Naive thymus-derived CD4-positive, alpha-beta T cell (primary cell): ENCODE measurements at regions of chr20 and their contacts with region 1.

Region 1: DNA sequence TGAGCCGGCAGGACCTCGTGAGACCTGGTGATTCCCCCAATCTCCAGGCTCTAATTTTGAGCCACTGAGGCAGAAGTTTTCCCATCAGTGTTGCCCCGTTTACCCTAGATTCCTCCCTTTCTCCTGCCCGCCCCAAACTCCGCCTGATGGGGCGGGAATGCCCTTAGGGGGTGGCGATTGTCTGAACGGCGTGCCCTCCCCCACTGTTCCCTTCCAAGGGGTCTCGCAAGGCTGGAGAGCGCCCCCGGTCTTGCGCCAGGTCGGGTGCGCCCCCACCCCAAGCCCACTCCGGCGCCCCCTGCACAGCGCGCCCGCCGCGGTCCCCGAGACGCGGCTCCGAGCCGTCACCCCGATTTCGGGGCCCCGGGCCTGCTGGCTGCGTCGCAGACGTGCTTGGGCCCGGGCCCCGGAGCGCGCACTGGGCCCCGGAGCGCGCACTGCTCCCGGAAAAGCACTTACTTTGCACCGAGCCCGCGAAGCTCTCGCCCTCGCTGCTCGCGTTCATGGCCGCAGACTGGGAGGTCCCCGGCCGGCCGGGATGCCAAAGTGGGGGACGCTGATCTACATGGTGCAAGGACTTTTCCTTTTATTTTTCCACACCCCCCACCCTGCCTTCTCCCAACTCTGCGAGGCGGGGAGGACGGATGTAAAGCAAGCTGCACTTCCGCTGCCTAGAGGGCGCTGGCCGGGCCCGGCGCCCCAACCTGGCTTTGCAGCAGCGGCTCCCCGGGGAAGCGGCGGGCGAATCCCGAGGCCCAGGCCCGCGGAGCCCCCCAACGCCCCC is at the start of gene ZFP64:
- DNase-seq: peak; percentile 72 to 85 (median 83)
- ATAC-seq: peak; percentile 89
- H3K4me3 ChIP-seq: peak within 1 kb of the TSS; percentile 88
- H3K4me3 Mint-ChIP-seq: peak within 1 kb of the TSS; percentile 81 to 96 (median 94)
- H3K27ac ChIP-seq: peak within 1 kb of the TSS; percentile 78
- H3K27ac Mint-ChIP-seq: peak within 1 kb of the TSS; percentile 86 to 95 (median 93)
- H3K4me1 ChIP-seq: peaks cover 0 to 10% of the 10 kb centered on the region in 2 donors
- H3K4me1 Mint-ChIP-seq: peaks cover 7 to 27% (median 18%) of the 10 kb centered on the region in 7 donors
- H3K27me3 ChIP-seq: no peaks in the 10 kb centered on the region
- H3K27me3 Mint-ChIP-seq: no peaks in the 10 kb centered on the region
- total RNA-seq, gene ZFP64: 8.0 to 14.6 (median 11.6) TPM

Region 2: DNA sequence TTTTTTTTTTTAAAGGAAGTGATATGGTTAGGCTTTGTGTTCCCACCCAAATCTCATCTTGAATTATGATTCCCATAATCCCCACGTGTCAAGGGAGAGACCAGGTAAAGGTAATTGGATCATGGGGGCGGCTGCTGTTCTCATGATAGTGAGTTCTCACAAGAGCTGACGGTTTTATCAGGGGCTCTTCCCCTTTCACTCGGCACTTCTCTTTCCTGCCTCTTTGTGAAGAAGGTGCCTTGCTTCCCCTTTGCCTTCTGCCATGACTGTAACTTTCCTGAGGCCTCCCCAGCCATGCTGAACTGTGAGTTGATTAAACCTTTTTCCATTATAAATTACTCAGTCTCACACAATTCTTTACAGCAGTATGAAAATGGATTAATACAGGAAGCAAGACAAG is 64.0 kb before region 1 on chr20:
- CTCF ChIA-PET with region 1: no interaction called
- POLR2A ChIA-PET with region 1: no interaction called
- intact Hi-C with region 1: loop called (anchors 1 to 2 kb)
- DNase-seq: no peak
- ATAC-seq: no peak
- H3K4me3 ChIP-seq: no peak overlapping the region
- H3K4me3 Mint-ChIP-seq: no peak overlapping the region
- H3K27ac ChIP-seq: no peak overlapping the region
- H3K27ac Mint-ChIP-seq: peak overlapping the region in 1 of 9 donors; percentile 3
- H3K4me1 ChIP-seq: no peaks in the 10 kb centered on the region
- H3K4me1 Mint-ChIP-seq: peaks cover 0 to 8% (median 2%) of the 10 kb centered on the region in 7 donors
- H3K27me3 ChIP-seq: no peaks in the 10 kb centered on the region
- H3K27me3 Mint-ChIP-seq: peaks cover 0 to 3% (median 0%) of the 10 kb centered on the region in 5 donors

Region 3: DNA sequence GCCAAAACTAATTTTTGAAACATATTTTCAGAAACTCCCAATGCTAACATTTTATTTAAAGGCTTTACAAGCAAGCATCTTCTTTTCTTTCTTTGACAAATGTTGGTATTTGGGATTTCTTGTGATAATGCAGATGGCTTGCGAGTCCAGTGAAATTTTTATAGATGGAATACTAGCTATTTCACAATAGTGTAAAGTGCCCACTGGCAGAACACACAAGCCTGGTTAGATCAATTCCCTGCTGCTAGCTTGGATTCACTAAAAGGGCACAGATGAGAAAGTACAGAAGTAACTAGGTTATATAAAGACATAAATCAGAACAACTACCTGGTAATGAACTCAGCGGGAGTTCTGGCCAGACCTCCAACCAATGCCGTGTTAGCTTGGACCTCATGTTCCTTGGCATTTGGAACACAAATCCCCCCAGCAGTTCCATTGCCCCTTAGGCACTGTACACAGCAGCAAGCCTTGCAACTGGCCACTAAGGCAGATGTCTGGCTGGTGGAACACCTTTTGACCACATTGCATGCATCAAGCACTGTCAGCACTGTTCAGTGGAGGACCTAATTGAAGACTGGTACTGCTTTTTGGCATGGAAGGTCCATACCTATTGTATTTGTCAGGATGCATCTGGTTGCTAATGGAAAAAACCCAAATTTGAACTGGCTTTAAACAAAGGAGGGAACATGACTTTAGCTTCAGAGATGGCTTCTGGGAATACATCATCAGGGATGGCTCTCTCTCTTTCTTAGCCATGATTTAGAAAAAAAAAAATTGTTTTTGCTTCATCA is 15.9 kb after region 1 on chr20:
- CTCF ChIA-PET with region 1: no interaction called
- POLR2A ChIA-PET with region 1: no interaction called
- intact Hi-C with region 1: no loop called
- DNase-seq: no peak
- ATAC-seq: no peak
- H3K4me3 ChIP-seq: no peak overlapping the region
- H3K4me3 Mint-ChIP-seq: no peak overlapping the region
- H3K27ac ChIP-seq: no peak overlapping the region
- H3K27ac Mint-ChIP-seq: no peak overlapping the region
- H3K4me1 ChIP-seq: no peaks in the 10 kb centered on the region
- H3K4me1 Mint-ChIP-seq: peaks cover 0 to 5% (median 0%) of the 10 kb centered on the region in 7 donors
- H3K27me3 ChIP-seq: no peaks in the 10 kb centered on the region
- H3K27me3 Mint-ChIP-seq: peaks cover 5 to 21% (median 12%) of the 10 kb centered on the region in 5 donors

Region 4: DNA sequence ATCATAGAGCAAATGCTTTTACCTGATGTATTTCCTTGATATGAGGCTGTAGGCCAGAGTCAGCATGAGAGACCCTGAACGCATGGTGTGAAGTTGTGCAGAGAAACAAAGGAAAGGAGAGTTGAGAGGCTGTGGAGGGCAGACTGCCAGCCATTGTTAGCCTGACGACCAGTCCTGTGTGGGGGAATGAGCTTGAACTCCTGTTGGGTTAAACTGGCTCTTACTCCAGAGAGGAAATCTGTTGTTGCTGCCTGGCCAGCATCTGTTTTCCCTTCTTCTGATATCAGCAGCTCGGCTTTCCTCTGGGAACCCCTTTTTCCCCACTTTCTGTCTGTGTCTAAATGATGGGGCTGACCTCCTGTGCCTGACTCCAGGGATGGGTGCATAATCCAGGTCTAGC is 158.5 kb after region 1 on chr20:
- CTCF ChIA-PET with region 1: no interaction called
- POLR2A ChIA-PET with region 1: no interaction called
- intact Hi-C with region 1: no loop called
- DNase-seq: no peak
- ATAC-seq: no peak
- H3K4me3 ChIP-seq: no peak overlapping the region
- H3K4me3 Mint-ChIP-seq: no peak overlapping the region
- H3K27ac ChIP-seq: no peak overlapping the region
- H3K27ac Mint-ChIP-seq: peak overlapping the region in 1 of 9 donors; percentile 34
- H3K4me1 ChIP-seq: no peaks in the 10 kb centered on the region
- H3K4me1 Mint-ChIP-seq: peaks cover 0 to 15% (median 9%) of the 10 kb centered on the region in 7 donors
- H3K27me3 ChIP-seq: no peaks in the 10 kb centered on the region
- H3K27me3 Mint-ChIP-seq: peaks cover 0 to 5% (median 0%) of the 10 kb centered on the region in 5 donors

Region 5: DNA sequence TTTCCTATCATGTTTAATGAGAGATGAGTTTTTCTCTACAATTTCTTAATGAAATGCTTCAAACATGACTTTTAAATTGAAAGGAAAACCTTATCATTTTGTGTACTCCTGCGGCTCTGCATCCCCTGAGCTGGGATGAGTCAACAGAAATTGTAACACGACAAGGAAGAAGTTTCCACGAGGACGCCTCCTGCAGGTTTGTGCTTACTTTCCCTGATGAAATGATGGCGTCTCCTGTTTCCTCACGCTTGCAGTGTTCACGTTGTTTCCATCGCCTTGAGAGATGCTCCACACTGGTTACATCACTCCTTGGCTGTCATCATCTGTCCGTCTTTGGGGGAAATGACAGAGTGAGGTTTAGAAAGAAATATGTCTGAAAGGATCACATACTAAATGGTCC is 233.9 kb after region 1 on chr20:
- CTCF ChIA-PET with region 1: no interaction called
- POLR2A ChIA-PET with region 1: no interaction called
- intact Hi-C with region 1: no loop called
- DNase-seq: no peak
- ATAC-seq: no peak
- H3K4me3 ChIP-seq: no peak overlapping the region
- H3K4me3 Mint-ChIP-seq: no peak overlapping the region
- H3K27ac ChIP-seq: no peak overlapping the region
- H3K27ac Mint-ChIP-seq: peak overlapping the region in 2 of 9 donors; percentile 6 to 72
- H3K4me1 ChIP-seq: no peaks in the 10 kb centered on the region
- H3K4me1 Mint-ChIP-seq: peaks cover 0 to 20% (median 5%) of the 10 kb centered on the region in 7 donors
- H3K27me3 ChIP-seq: no peaks in the 10 kb centered on the region
- H3K27me3 Mint-ChIP-seq: no peaks in the 10 kb centered on the region

Region 6: DNA sequence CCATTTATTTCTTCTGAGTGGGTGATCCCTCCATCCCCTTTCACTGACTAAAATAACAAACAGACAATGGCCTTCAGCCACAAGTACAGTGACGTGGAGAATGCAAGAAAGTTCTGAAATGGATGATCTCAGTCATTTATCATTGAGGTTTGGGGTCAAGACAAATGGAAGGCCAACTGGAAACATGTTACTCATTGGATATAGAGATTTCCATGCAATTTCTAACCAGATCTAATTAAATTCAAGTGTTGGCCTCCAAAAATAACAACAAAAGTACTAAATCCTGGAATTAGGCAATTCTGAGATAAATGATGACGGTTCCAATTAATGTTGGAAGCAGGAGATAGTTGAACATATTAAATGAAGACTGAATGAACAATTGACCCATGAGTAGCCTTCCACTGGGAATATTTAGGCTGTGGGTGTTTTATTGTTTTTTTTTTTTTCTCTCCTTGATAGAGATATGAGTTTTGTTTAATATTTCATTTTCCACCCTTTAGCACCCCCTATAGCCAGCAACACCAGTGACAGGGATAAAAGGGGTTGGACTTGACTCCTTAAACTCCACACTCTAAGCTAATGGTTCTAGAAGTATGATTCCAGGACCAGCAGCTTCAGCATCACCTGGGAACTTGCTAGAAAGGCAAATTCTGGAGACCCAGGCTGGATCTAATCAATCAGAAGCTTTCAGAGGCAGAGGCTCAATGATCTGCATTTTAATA is 1766.3 kb after region 1 on chr20:
- CTCF ChIA-PET with region 1: no interaction called
- POLR2A ChIA-PET with region 1: no interaction called
- intact Hi-C with region 1: loop called in 1 of 2 experiments (anchors 10 kb)
- DNase-seq: no peak
- ATAC-seq: no peak
- H3K4me3 ChIP-seq: no peak overlapping the region
- H3K4me3 Mint-ChIP-seq: no peak overlapping the region
- H3K27ac ChIP-seq: no peak overlapping the region
- H3K27ac Mint-ChIP-seq: no peak overlapping the region
- H3K4me1 ChIP-seq: no peaks in the 10 kb centered on the region
- H3K4me1 Mint-ChIP-seq: peaks cover 4 to 10% (median 5%) of the 10 kb centered on the region in 7 donors
- H3K27me3 ChIP-seq: no peaks in the 10 kb centered on the region
- H3K27me3 Mint-ChIP-seq: peaks cover 0 to 35% (median 4%) of the 10 kb centered on the region in 5 donors